ENCODE measurements at regions of chr2 and their contacts with region 1.

Region 1: DNA sequence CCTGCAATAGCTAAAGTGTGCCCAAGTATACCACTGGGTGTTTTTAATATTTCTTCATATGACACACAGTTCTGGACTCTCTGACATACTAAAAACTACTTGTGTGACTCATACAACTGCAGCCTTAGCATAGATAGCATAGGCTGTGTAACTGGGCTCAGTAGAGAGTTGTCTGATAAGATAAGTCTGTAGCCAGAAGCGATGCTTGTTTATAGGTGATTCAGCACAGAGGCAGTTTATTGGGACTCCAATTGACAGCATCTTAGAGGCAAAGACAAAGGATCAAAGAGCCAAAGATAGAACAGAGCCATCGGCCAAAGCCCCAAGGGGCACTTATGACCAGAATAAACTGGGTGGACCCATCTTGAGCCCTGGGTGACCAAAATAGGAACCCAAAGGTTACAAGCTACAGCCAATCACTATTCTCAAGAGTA is 42.3 kb downstream of the AAK1 start:
- DNase-seq: no peak
- H3K4me3 Mint-ChIP-seq: no peak overlapping the region
- H3K27ac Mint-ChIP-seq: no peak overlapping the region
- H3K4me1 Mint-ChIP-seq: peaks cover 53% of the 10 kb centered on the region
- H3K27me3 Mint-ChIP-seq: no peaks in the 10 kb centered on the region
- CTCF ChIP-seq: no peak

Region 2: GRCh38 chr2:69372767-69373166 is 228.4 kb before region 1 on chr2:
- CTCF ChIA-PET with region 1: no interaction called
- intact Hi-C with region 1: no loop called
- DNase-seq: no peak
- H3K4me3 Mint-ChIP-seq: no peak overlapping the region
- H3K27ac Mint-ChIP-seq: no peak overlapping the region
- H3K4me1 Mint-ChIP-seq: peaks cover 21% of the 10 kb centered on the region
- H3K27me3 Mint-ChIP-seq: no peaks in the 10 kb centered on the region
- CTCF ChIP-seq: no peak

Region 3: DNA sequence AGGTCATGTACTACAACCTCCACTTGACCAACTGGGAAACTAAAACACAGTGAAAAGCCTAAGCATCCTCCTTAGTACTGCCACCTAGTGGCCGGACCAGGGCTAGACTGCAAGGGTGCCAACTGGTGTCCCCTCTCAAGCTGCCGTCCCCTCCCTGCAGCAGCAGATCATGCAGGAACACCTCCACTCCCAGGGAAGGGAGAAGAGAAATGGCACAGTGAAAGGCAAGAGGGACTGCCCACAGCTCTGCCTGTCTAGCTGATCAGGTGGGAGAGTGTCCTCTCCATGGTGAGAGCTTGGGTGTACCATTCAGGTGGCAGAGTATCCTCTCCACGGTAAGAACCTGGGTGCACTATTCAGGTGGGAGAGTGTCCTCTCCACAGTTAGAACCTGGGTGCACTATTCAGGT is 35.8 kb before region 1 on chr2:
- CTCF ChIA-PET with region 1: interaction called, 5 read pairs
- intact Hi-C with region 1: loop called (anchors 5 kb)
- DNase-seq: peak; percentile 67
- H3K4me3 Mint-ChIP-seq: no peak overlapping the region
- H3K27ac Mint-ChIP-seq: no peak overlapping the region
- H3K4me1 Mint-ChIP-seq: peaks cover 38% of the 10 kb centered on the region
- H3K27me3 Mint-ChIP-seq: no peaks in the 10 kb centered on the region
- CTCF ChIP-seq: peak; percentile 68

Measured in Calu3 (cell line).